AG04449 (cell line): ENCODE measurements at regions of chr1 and their contacts with region 1.

Region 1: DNA sequence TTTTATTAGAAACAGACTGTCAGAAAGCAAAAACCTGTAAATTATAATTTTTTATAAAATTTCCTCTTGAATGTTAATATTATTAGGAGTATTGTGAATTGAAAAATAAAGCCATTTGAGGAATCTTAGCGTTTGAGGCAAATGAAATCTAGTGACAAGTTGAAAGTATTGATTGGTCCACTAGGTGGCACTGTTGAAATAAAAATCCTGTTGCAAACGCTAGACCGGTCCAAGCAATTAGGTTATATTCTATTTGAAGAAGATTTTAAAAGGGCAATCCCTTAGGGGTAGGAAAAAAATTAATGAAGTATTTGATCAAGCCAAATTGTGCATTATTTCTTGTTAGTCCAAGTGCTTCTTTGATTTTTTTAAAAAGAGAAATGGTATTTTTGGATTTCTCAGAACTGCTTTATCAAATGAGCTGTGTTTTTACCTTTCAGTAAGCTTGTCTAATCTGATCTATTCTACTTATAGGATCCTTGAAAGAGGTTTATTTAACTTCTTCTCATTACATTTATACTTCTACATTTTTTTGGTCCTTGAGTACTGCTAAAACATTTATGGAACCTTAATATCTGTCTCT is 57.7 kb downstream of the ATG4C start:
- DNase-seq: peak; percentile 14
- H3K4me3 ChIP-seq: no peak overlapping the region
- CTCF ChIP-seq: peak; percentile 39

Region 2: GRCh38 chr1:62856960-62857359 is 15.3 kb after region 1 on chr1:
- CTCF ChIA-PET with region 1: interaction called, 25 read pairs
- POLR2A ChIA-PET with region 1: no interaction called
- DNase-seq: no peak
- H3K4me3 ChIP-seq: no peak overlapping the region
- CTCF ChIP-seq: no peak

Region 3: DNA sequence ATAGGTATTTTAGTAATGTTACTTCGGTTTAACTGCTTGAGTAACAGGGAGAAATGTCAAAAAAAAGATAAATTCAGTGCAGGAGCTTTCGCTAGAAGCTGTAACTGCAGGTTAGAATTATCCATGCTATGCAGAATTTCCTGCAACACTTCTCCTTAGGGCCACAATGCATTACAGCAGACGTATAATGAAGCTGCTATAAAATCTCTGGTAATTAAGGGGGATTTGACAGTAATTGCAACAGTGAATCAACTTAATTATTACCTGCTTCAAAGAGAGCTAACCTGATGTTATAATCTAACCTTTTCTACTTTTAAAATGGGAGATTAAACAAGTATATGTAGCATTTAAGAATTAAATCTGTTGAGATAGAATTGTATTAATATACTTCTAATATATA is 34.9 kb after region 1 on chr1:
- CTCF ChIA-PET with region 1: no interaction called
- POLR2A ChIA-PET with region 1: no interaction called
- DNase-seq: no peak
- H3K4me3 ChIP-seq: no peak overlapping the region
- CTCF ChIP-seq: no peak

Region 4: GRCh38 chr1:63148825-63149645 is 307.4 kb after region 1 on chr1:
- CTCF ChIA-PET with region 1: interaction called, 21 read pairs
- POLR2A ChIA-PET with region 1: no interaction called
- DNase-seq: no peak
- H3K4me3 ChIP-seq: no peak overlapping the region
- CTCF ChIP-seq: peak; percentile 74